CD14-positive monocyte (primary cell): ENCODE measurements at regions of chr19 and their contacts with region 1.

Region 1: DNA sequence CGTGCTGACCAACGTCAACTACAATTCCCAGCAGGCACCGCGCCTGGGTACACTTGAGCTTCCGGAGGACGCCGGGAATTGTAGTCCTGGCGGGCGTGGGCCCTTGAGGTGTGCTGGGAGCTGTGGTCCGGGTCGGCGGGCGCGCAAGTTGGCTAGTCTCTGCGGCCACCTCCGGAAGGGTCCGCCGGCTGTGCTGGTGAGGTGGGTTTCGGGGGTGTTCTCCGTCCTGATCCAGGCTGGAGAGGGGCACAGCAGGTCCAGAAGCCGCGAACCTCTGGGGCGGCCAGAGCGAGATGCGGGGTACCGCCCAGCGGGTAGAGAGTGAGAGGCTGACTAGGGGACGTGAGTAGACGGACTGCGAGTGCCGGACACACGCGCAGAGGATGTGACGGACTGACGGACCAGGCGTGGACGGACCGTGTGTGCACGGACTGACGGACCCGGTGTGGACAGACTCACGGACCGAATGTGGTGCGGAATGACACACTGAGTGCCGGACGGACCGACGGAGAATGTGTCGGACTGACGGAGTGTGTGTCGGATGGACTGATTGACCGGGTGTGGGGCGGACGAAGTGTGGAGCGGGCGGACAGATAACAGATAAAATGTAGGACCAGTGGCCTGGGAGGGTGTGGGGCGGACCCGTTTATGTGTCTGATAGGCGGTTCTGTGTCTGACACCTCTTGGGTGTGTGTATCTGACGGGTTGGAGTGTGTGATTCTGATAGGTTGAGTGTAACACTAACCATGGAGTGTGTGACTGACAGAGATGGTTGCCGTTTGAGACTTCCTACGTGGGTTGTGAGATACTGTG is at the start of gene ZSCAN22:
- DNase-seq: peak; percentile 88 to 94 (median 91)
- H3K4me3 ChIP-seq: peak within 1 kb of the TSS; percentile 58 to 87 (median 73)
- H3K4me3 Mint-ChIP-seq: no peak within 1 kb of the TSS
- H3K27ac ChIP-seq: peak within 1 kb of the TSS; percentile 76 to 97
- H3K27ac Mint-ChIP-seq: no peak within 1 kb of the TSS
- H3K4me1 ChIP-seq: peaks cover 18 to 19% of the 10 kb centered on the region in 2 donors
- H3K4me1 Mint-ChIP-seq: peaks cover 6% of the 10 kb centered on the region
- H3K27me3 ChIP-seq: no peaks in the 10 kb centered on the region
- H3K27me3 Mint-ChIP-seq: no peaks in the 10 kb centered on the region
- CTCF ChIP-seq: no peak
- polyA plus RNA-seq, gene ZSCAN22: 0.58 to 1.2 (median 0.99) TPM

Region 2: GRCh38 chr19:58278157-58279041 is 48.7 kb before region 1 on chr19 and contains the start of gene ZNF8:
- intact Hi-C with region 1: loop called in 1 of 2 experiments (anchors 1 kb)
- DNase-seq: peak; percentile 94 to 98 (median 96)
- H3K4me3 ChIP-seq: peak within 1 kb of the TSS; percentile 67 to 91 (median 89)
- H3K4me3 Mint-ChIP-seq: peak within 1 kb of the TSS; percentile 92 to 95
- H3K27ac ChIP-seq: peak within 1 kb of the TSS; percentile 75 to 87
- H3K27ac Mint-ChIP-seq: peak within 1 kb of the TSS; percentile 86 to 95 (median 94)
- H3K4me1 ChIP-seq: peaks cover 15 to 25% of the 10 kb centered on the region in 2 donors
- H3K4me1 Mint-ChIP-seq: peaks cover 20% of the 10 kb centered on the region
- H3K27me3 ChIP-seq: no peaks in the 10 kb centered on the region
- H3K27me3 Mint-ChIP-seq: peaks cover 0 to 3% (median 2%) of the 10 kb centered on the region in 3 donors
- CTCF ChIP-seq: no peak
- polyA plus RNA-seq, gene ZNF8: 0.05 to 2.4 (median 0.25) TPM

Region 3: GRCh38 chr19:58294743-58295374 is 32.3 kb before region 1 on chr19:
- intact Hi-C with region 1: no loop called
- DNase-seq: no peak
- H3K4me3 ChIP-seq: peak overlapping the region in 1 of 3 experiments; percentile 47
- H3K4me3 Mint-ChIP-seq: no peak overlapping the region
- H3K27ac ChIP-seq: no peak overlapping the region
- H3K27ac Mint-ChIP-seq: no peak overlapping the region
- H3K4me1 ChIP-seq: no peaks in the 10 kb centered on the region
- H3K4me1 Mint-ChIP-seq: no peaks in the 10 kb centered on the region
- H3K27me3 ChIP-seq: no peaks in the 10 kb centered on the region
- H3K27me3 Mint-ChIP-seq: no peaks in the 10 kb centered on the region
- CTCF ChIP-seq: no peak

Region 4: DNA sequence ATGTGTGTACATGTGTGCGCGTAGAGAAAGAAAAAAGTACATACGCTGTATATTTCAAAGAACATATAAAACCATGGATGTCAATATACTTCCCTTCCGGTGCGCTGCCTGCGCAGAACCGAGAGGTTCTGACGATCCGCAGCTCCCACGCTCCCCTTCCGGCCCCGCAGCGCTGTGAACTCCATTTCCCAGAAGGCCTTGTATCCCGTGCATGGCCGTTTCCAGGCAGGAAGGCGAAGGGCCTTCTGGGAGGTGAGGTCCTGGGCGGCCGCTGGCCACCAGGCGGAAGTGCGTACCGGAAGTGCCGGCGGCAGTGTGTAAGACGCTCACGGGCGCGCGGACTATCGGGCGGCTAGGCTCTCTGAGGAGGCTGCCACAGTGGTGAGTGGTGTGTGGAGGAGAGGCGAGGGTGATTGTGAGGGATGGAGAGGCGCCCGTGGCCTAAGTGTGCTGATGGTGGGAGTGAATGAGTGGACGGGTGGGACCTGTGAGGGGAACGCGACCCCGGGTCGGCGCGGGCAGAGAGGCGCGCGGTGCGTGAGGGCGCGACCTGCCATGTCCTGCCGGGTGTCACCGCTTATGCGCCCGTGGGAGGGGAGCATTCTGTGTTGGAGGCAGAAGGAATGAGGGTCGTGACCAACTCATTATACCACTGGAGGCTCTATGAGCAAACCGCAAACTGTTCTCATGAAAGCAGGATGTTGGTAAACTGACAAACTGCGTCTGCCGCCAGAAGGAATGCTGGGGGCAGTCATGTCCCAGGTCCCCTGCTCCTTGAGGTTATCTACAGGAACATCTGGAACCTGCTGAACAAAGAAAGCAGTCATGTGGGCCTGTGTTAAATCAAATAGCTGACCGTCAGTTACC is 21.8 kb before region 1 on chr19 and contains the start of gene ERVK3-1:
- intact Hi-C with region 1: loop called (anchors 2 kb)
- DNase-seq: peak; percentile 99
- H3K4me3 ChIP-seq: peak within 1 kb of the TSS; percentile 60 to 90 (median 80)
- H3K4me3 Mint-ChIP-seq: peak within 1 kb of the TSS; percentile 91 to 99
- H3K27ac ChIP-seq: peak within 1 kb of the TSS; percentile 65 to 97
- H3K27ac Mint-ChIP-seq: peak within 1 kb of the TSS; percentile 96 to 99 (median 98)
- H3K4me1 ChIP-seq: peaks cover 12 to 16% of the 10 kb centered on the region in 2 donors
- H3K4me1 Mint-ChIP-seq: peaks cover 16% of the 10 kb centered on the region
- H3K27me3 ChIP-seq: no peaks in the 10 kb centered on the region
- H3K27me3 Mint-ChIP-seq: peaks cover 0 to 2% (median 0%) of the 10 kb centered on the region in 3 donors
- CTCF ChIP-seq: no peak
- polyA plus RNA-seq, gene ERVK3-1: 34.6 to 61.5 (median 38.8) TPM

Region 5: GRCh38 chr19:58380722-58381466 is 53.8 kb after region 1 on chr19 and contains the start of gene ZNF837:
- intact Hi-C with region 1: loop called (anchors 2 kb)
- DNase-seq: peak; percentile 99 to 100 (median 100)
- H3K4me3 ChIP-seq: peak within 1 kb of the TSS; percentile 54 to 86 (median 78)
- H3K4me3 Mint-ChIP-seq: peak within 1 kb of the TSS; percentile 82 to 92
- H3K27ac ChIP-seq: peak within 1 kb of the TSS; percentile 81 to 95
- H3K27ac Mint-ChIP-seq: peak within 1 kb of the TSS; percentile 78 to 98 (median 95)
- H3K4me1 ChIP-seq: peaks cover 26 to 31% of the 10 kb centered on the region in 2 donors
- H3K4me1 Mint-ChIP-seq: peaks cover 28% of the 10 kb centered on the region
- H3K27me3 ChIP-seq: no peaks in the 10 kb centered on the region
- H3K27me3 Mint-ChIP-seq: peaks cover 0 to 2% (median 0%) of the 10 kb centered on the region in 3 donors
- CTCF ChIP-seq: no peak
- polyA plus RNA-seq, gene ZNF837: 0.13 to 0.72 (median 0.33) TPM

Region 6: GRCh38 chr19:58408152-58409009 is 81.3 kb after region 1 on chr19 and contains the start of gene ZNF584:
- intact Hi-C with region 1: loop called in 1 of 2 experiments (anchors 5 kb)
- DNase-seq: peak; percentile 90 to 93 (median 92)
- H3K4me3 ChIP-seq: peak within 1 kb of the TSS; percentile 61 to 96 (median 72)
- H3K4me3 Mint-ChIP-seq: peak within 1 kb of the TSS; percentile 84 to 92
- H3K27ac ChIP-seq: peak within 1 kb of the TSS; percentile 85 to 88
- H3K27ac Mint-ChIP-seq: peak within 1 kb of the TSS; percentile 89 to 98 (median 94)
- H3K4me1 ChIP-seq: peaks cover 16 to 22% of the 10 kb centered on the region in 2 donors
- H3K4me1 Mint-ChIP-seq: peaks cover 26% of the 10 kb centered on the region
- H3K27me3 ChIP-seq: no peaks in the 10 kb centered on the region
- H3K27me3 Mint-ChIP-seq: peaks cover 0 to 5% (median 5%) of the 10 kb centered on the region in 3 donors
- CTCF ChIP-seq: peak; percentile 14
- polyA plus RNA-seq, gene ZNF584: 1.2 to 3.1 (median 1.7) TPM